Dendritic cell treated with granulocyte-macrophage colony-stimulating factor and Interleukin-4, amounts not matched to agents 40 ng/mL and 50 ng/mL, for 4 days (primary cell): ENCODE measurements at regions of chr4 and their contacts with region 1.

Region 1: DNA sequence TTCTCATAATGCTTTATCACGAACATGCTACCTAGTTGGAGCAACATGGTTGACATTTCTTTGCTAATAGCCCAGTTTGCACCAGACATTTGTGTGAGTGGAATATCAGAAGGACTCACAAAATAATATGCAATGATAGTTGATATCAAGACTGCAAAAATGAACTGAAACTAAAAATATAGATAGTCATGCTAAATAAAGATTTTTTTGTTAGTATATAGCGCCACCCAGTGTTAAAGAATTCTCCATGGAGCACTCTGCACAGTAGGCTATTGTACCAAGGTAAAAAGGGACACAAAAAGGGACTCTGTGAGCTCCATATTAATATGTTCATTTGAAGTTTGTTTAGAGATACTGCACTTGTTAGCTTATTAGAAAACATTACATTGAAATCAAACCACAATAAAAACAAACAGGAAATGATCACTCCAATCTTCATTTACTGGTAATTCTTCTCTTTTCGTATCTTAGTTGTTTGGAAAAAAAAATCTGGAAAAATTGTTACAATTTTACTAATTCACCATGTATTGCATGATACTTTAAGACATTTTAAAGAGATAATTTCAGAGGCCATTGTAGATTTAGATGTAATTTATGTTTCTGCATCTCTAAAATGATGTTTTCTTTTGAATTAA is 1509.6 kb downstream of the ADGRL3 start:
- H3K4me3 Mint-ChIP-seq: no peak overlapping the region
- H3K27ac Mint-ChIP-seq: no peak overlapping the region
- H3K4me1 Mint-ChIP-seq: no peaks in the 10 kb centered on the region
- H3K27me3 Mint-ChIP-seq: no peaks in the 10 kb centered on the region

Region 2: DNA sequence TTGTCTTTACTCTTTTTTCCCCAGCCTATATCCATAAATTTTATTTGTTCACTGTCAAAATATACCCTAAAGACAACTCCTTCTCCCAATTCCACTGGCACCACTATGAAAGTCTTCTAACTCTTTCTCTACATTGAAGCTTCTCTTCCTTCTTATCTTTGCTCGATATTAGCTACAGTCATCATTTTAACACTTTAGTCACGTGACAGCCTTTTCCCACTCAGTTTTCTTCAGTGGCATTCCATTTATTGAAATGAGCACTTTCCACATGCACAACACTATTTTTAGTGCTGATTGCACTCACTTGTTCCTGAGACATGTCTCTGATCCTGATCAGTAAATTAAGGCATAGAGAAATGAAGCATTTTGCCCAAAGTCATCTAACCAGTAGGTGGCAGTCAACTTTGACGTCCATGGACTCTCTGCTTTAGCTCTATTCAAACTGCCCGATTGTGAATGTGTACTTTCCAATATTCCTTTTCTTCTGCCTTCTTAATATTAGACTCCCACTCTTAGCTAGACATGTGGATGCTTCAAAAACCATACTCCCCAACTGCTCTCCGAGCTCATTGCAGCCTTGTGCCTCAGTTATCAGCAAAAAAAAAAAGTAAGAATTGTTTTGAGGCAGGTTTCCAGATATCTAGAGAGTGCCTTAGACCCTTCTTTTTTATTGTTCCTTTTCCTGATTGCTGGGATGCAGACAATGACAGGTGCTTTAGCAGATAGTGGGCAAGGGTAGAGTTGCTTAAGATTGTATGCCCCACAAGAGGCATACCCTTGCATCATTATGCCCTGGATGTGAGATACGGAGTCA is 1904.0 kb before region 1 on chr4:
- intact Hi-C with region 1: loop called (anchors 2 kb)
- H3K4me3 Mint-ChIP-seq: no peak overlapping the region
- H3K27ac Mint-ChIP-seq: no peak overlapping the region
- H3K4me1 Mint-ChIP-seq: no peaks in the 10 kb centered on the region
- H3K27me3 Mint-ChIP-seq: no peaks in the 10 kb centered on the region